ENCODE measurements at regions of chr16 and their contacts with region 1.

Region 1: GRCh38 chr16:49441366-49441780 is 67.8 kb downstream of the C16orf78 start:
- DNase-seq: peak; percentile 41 to 87 (median 70)
- ATAC-seq: peak; percentile 97
- H3K4me3 ChIP-seq: peak overlapping the region; percentile 31 to 34
- H3K4me3 Mint-ChIP-seq: peak overlapping the region; percentile 73
- H3K27ac ChIP-seq: peak overlapping the region; percentile 46 to 75
- H3K27ac Mint-ChIP-seq: peak overlapping the region; percentile 91
- H3K4me1 ChIP-seq: peaks cover 25% of the 10 kb centered on the region
- H3K4me1 Mint-ChIP-seq: peaks cover 31% of the 10 kb centered on the region
- H3K27me3 ChIP-seq: no peaks in the 10 kb centered on the region
- H3K27me3 Mint-ChIP-seq: no peaks in the 10 kb centered on the region
- CTCF ChIP-seq: peak; percentile 37

Region 2: DNA sequence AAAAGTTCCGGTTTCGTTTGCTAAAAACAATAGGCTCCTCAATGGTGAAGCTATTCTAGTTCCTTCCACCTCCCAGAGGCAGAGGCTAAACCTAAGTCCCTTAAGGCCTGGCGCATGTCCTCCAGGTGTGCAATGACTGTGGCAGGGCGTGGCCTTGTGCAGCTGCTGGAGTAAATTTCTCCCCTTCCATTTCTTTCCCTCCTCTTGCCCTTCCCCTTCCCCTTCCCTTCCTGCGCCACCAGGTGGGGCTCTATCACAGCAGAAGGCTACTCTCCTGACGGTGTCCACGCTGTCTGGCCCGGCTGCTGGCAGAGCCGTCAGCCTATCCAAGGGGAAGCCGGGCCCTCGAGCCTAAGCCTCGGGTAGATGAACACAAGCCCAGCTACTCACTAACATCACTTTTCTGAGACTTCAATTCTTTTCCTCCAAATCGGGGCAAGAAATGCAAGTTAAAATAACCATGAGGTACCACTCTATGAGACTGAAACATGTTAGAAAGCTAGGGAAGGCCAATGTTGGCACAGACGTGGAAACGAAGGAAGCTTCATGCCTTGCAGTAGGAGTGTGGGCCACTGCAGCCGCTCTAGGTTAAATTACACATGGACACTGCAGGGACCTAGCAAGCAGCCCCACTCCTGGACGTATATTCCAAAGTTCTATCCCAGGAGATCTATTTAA is 33.4 kb before region 1 on chr16:
- CTCF ChIA-PET with region 1: no interaction called
- POLR2A ChIA-PET with region 1: no interaction called
- intact Hi-C with region 1: loop called in 1 of 2 experiments (anchors 1 kb)
- DNase-seq: peak; percentile 24 to 76 (median 64)
- ATAC-seq: peak; percentile 42
- H3K4me3 ChIP-seq: no peak overlapping the region
- H3K4me3 Mint-ChIP-seq: no peak overlapping the region
- H3K27ac ChIP-seq: no peak overlapping the region
- H3K27ac Mint-ChIP-seq: no peak overlapping the region
- H3K4me1 ChIP-seq: no peaks in the 10 kb centered on the region
- H3K4me1 Mint-ChIP-seq: peaks cover 3% of the 10 kb centered on the region
- H3K27me3 ChIP-seq: no peaks in the 10 kb centered on the region
- H3K27me3 Mint-ChIP-seq: peaks cover 17% of the 10 kb centered on the region
- CTCF ChIP-seq: peak; percentile 74

Region 3: GRCh38 chr16:49463529-49463928 is 22.2 kb after region 1 on chr16:
- CTCF ChIA-PET with region 1: interaction called, 6 read pairs
- POLR2A ChIA-PET with region 1: interaction called, 4 read pairs
- intact Hi-C with region 1: loop called in 1 of 2 experiments (anchors 1 kb)
- DNase-seq: peak; percentile 55 to 90 (median 75)
- ATAC-seq: peak; percentile 83
- H3K4me3 ChIP-seq: peak overlapping the region in 1 of 2 experiments; percentile 10
- H3K4me3 Mint-ChIP-seq: peak overlapping the region; percentile 32
- H3K27ac ChIP-seq: peak overlapping the region; percentile 34 to 44
- H3K27ac Mint-ChIP-seq: peak overlapping the region; percentile 94
- H3K4me1 ChIP-seq: peaks cover 52% of the 10 kb centered on the region
- H3K4me1 Mint-ChIP-seq: peaks cover 51% of the 10 kb centered on the region
- H3K27me3 ChIP-seq: no peaks in the 10 kb centered on the region
- H3K27me3 Mint-ChIP-seq: no peaks in the 10 kb centered on the region
- CTCF ChIP-seq: no peak

Region 4: GRCh38 chr16:49491771-49492761 is 50.7 kb after region 1 on chr16:
- CTCF ChIA-PET with region 1: no interaction called
- POLR2A ChIA-PET with region 1: no interaction called
- intact Hi-C with region 1: loop called (anchors 1 to 2 kb)
- DNase-seq: peak in 7 of 9 experiments; percentile 21 to 64 (median 54)
- ATAC-seq: peak; percentile 78
- H3K4me3 ChIP-seq: no peak overlapping the region
- H3K4me3 Mint-ChIP-seq: no peak overlapping the region
- H3K27ac ChIP-seq: no peak overlapping the region
- H3K27ac Mint-ChIP-seq: no peak overlapping the region
- H3K4me1 ChIP-seq: no peaks in the 10 kb centered on the region
- H3K4me1 Mint-ChIP-seq: peaks cover 2% of the 10 kb centered on the region
- H3K27me3 ChIP-seq: no peaks in the 10 kb centered on the region
- H3K27me3 Mint-ChIP-seq: no peaks in the 10 kb centered on the region
- CTCF ChIP-seq: peak; percentile 83

Region 5: DNA sequence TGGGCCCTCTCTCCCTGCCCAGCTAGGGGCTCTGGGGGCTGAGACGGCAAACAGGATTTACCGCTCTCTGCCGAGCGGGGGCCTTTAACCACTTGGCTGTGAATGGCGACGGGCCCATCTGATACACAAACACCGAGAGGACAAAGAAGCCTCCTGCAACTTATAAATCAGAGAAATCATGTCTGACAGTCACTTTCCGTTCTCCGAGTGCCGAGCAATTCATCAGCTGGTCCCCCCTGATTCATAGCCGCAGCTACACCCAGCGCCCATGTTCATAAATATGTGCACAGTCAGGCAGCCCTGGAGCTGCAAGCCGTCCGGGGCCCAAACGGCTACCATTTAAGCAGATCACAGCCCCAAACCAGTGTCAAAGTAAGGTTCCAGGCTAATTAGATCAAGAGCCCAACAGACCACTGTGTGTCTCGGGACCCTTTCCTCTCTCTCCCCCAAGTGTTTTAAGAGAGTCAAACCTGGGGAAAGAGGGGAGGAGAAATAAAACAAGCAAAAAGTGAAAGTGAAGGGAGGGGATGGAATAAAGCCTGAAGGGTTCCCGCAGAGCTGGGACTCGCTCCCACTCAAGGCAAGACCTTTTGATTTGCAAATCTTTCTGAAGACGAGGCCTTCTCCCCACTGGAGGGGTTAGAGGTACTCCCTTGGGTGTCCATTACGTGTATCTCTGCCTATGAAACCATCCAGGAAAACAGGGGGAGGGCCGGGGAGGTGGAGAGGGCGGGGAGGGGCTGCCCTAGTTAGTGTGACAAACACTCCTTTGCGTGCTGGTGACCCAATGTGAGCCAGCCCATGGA is 86.9 kb after region 1 on chr16:
- CTCF ChIA-PET with region 1: no interaction called
- POLR2A ChIA-PET with region 1: no interaction called
- intact Hi-C with region 1: loop called in 1 of 2 experiments (anchors 10 kb)
- DNase-seq: peak in 2 of 9 experiments; percentile 23 to 40
- ATAC-seq: peak; percentile 54
- H3K4me3 ChIP-seq: peak overlapping the region; percentile 38 to 52
- H3K4me3 Mint-ChIP-seq: peak overlapping the region; percentile 86
- H3K27ac ChIP-seq: peak overlapping the region in 1 of 2 experiments; percentile 43
- H3K27ac Mint-ChIP-seq: peak overlapping the region; percentile 87
- H3K4me1 ChIP-seq: no peaks in the 10 kb centered on the region
- H3K4me1 Mint-ChIP-seq: peaks cover 17% of the 10 kb centered on the region
- H3K27me3 ChIP-seq: no peaks in the 10 kb centered on the region
- H3K27me3 Mint-ChIP-seq: no peaks in the 10 kb centered on the region
- CTCF ChIP-seq: no peak

Region 6: DNA sequence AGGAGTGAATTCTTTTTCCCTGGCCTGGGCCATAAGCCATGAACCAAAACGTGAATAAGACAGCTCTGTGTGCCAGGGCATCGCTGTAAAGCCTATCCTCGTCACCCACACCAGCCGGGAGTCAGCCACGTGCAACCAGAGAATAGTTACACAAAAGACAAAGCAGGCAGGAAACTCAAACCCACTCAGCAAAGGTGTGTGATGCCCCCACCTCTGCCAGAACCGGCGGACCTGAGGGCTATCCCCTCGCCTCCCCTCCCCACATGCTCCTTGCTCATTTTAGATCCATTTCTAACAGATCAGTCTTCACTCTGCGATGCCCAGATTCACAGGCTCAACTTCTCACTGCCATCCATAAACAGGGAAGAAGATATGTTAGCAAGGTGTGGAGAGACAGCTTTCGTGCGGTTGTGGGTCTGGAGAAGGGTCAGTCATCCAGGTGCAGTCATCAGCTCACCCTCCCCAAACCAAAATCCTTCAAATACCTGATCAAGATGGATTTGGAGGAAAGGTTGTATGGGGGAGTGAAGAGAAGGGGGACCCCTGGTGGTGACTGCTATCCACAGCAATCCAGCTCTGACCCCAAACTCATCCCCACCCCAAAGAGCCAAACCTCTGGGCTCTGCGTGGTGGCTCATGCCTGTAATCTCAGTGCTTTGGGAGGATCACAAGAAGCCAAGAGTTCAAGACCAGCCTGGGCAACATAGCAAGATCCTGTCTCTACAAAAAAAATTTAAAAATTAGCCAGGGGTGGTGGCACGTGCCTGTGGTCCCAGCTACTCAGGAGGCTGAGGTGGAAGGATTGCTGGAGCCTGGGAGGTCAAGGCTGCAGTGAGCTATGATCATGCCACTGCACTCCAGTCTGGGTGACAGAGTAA is 151.4 kb after region 1 on chr16:
- CTCF ChIA-PET with region 1: interaction called, 18 read pairs
- POLR2A ChIA-PET with region 1: interaction called, 3 read pairs
- intact Hi-C with region 1: loop called in 1 of 2 experiments (anchors 1 kb)
- DNase-seq: peak; percentile 5 to 69 (median 42)
- ATAC-seq: peak; percentile 59
- H3K4me3 ChIP-seq: no peak overlapping the region
- H3K4me3 Mint-ChIP-seq: no peak overlapping the region
- H3K27ac ChIP-seq: no peak overlapping the region
- H3K27ac Mint-ChIP-seq: no peak overlapping the region
- H3K4me1 ChIP-seq: no peaks in the 10 kb centered on the region
- H3K4me1 Mint-ChIP-seq: peaks cover 12% of the 10 kb centered on the region
- H3K27me3 ChIP-seq: no peaks in the 10 kb centered on the region
- H3K27me3 Mint-ChIP-seq: peaks cover 7% of the 10 kb centered on the region
- CTCF ChIP-seq: peak; percentile 67

Region 7: GRCh38 chr16:49617016-49617629 is 175.8 kb after region 1 on chr16:
- CTCF ChIA-PET with region 1: no interaction called
- POLR2A ChIA-PET with region 1: no interaction called
- intact Hi-C with region 1: no loop called
- DNase-seq: no peak
- ATAC-seq: no peak
- H3K4me3 ChIP-seq: no peak overlapping the region
- H3K4me3 Mint-ChIP-seq: no peak overlapping the region
- H3K27ac ChIP-seq: no peak overlapping the region
- H3K27ac Mint-ChIP-seq: no peak overlapping the region
- H3K4me1 ChIP-seq: no peaks in the 10 kb centered on the region
- H3K4me1 Mint-ChIP-seq: no peaks in the 10 kb centered on the region
- H3K27me3 ChIP-seq: no peaks in the 10 kb centered on the region
- H3K27me3 Mint-ChIP-seq: no peaks in the 10 kb centered on the region
- CTCF ChIP-seq: no peak

Region 8: GRCh38 chr16:49766225-49766624 is 324.9 kb after region 1 on chr16:
- CTCF ChIA-PET with region 1: no interaction called
- POLR2A ChIA-PET with region 1: no interaction called
- intact Hi-C with region 1: no loop called
- DNase-seq: no peak
- ATAC-seq: no peak
- H3K4me3 ChIP-seq: no peak overlapping the region
- H3K4me3 Mint-ChIP-seq: no peak overlapping the region
- H3K27ac ChIP-seq: no peak overlapping the region
- H3K27ac Mint-ChIP-seq: no peak overlapping the region
- H3K4me1 ChIP-seq: no peaks in the 10 kb centered on the region
- H3K4me1 Mint-ChIP-seq: no peaks in the 10 kb centered on the region
- H3K27me3 ChIP-seq: no peaks in the 10 kb centered on the region
- H3K27me3 Mint-ChIP-seq: peaks cover 2% of the 10 kb centered on the region
- CTCF ChIP-seq: no peak

Region 9: GRCh38 chr16:50065624-50066481 is 624.5 kb after region 1 on chr16 and contains the start of gene HEATR3:
- CTCF ChIA-PET with region 1: no interaction called
- POLR2A ChIA-PET with region 1: no interaction called
- intact Hi-C with region 1: loop called in 1 of 2 experiments (anchors 5 kb)
- DNase-seq: peak; percentile 88 to 97 (median 93)
- ATAC-seq: peak; percentile 86
- H3K4me3 ChIP-seq: peak within 1 kb of the TSS; percentile 78 to 92
- H3K4me3 Mint-ChIP-seq: peak within 1 kb of the TSS; percentile 93
- H3K27ac ChIP-seq: peak within 1 kb of the TSS; percentile 73 to 79
- H3K27ac Mint-ChIP-seq: peak within 1 kb of the TSS; percentile 92
- H3K4me1 ChIP-seq: peaks cover 17% of the 10 kb centered on the region
- H3K4me1 Mint-ChIP-seq: peaks cover 42% of the 10 kb centered on the region
- H3K27me3 ChIP-seq: no peaks in the 10 kb centered on the region
- H3K27me3 Mint-ChIP-seq: no peaks in the 10 kb centered on the region
- CTCF ChIP-seq: no peak
- total RNA-seq, gene HEATR3: 9.3 to 11.4 TPM

Measured in CD8-positive, alpha-beta T cell (primary cell).